BJ (cell line): ENCODE measurements at regions of chr3 and their contacts with region 1.

Region 1: DNA sequence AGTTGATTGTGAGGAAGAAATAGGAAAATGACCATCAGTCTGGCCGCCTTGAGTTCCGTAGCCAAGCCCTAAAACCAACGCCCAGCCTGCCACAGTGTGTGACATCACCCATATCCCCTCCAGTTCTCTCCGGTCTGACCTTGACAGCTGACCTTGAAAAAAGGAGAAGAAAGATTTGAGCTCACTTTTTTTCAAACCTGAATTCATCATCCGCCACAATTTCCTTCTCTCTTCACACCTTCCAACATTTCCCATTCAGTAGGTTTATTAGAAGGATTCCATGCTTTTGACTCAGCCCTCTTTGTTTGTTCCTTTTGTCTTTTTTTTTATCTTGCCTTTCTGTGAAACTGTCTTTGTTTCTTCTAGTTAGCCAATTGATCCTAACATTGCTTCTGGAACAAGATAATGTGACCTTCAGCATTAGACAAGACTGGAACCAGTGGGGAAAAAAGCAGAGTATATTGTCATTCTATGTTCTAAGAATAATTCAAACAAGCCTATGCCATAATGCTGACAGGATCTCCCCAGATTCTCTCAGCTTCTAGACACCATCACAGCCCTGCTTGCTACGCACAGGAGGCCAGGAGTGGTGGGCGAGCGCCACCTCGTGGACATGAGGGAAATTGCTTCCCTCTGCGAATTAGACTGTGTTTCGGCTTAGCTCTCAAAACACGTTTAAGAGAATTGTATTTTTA is 283.1 kb downstream of the FGF12 start:
- DNase-seq: no peak
- H3K4me3 ChIP-seq: no peak overlapping the region
- H3K27me3 ChIP-seq: no peaks in the 10 kb centered on the region
- CTCF ChIP-seq: peak; percentile 97

Region 2: GRCh38 chr3:190883973-190884832 is 1560.0 kb before region 1 on chr3:
- CTCF ChIA-PET with region 1: interaction called, 42 read pairs
- POLR2A ChIA-PET with region 1: no interaction called
- DNase-seq: no peak
- H3K4me3 ChIP-seq: no peak overlapping the region
- H3K27me3 ChIP-seq: no peaks in the 10 kb centered on the region
- CTCF ChIP-seq: peak; percentile 93

Region 3: GRCh38 chr3:191136347-191136746 is 1307.9 kb before region 1 on chr3:
- CTCF ChIA-PET with region 1: interaction called, 17 read pairs
- POLR2A ChIA-PET with region 1: no interaction called
- DNase-seq: no peak
- H3K4me3 ChIP-seq: no peak overlapping the region
- H3K27me3 ChIP-seq: no peaks in the 10 kb centered on the region
- CTCF ChIP-seq: peak; percentile 50

Region 4: DNA sequence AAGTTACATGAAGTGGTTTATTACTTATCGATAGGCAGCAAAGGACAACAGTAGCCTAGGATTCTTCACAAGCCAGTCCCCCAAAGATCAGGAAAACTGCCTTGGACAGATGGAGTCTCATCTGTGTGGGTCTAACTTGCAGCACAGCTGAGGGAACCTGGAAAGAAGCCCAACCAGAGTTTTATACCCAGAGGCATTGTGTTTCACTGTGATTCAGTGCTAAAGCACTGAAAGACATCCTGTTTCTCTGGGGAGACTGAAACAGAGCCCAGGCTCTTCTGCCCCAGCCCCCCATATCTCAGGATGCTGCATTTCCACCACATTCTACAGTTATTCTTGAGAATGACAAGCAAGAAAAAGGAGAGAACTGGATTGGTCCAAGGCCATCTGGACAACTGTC is 1031.5 kb before region 1 on chr3:
- CTCF ChIA-PET with region 1: interaction called, 27 read pairs
- POLR2A ChIA-PET with region 1: no interaction called
- DNase-seq: peak; percentile 79
- H3K4me3 ChIP-seq: no peak overlapping the region
- H3K27me3 ChIP-seq: no peaks in the 10 kb centered on the region
- CTCF ChIP-seq: no peak

Region 5: DNA sequence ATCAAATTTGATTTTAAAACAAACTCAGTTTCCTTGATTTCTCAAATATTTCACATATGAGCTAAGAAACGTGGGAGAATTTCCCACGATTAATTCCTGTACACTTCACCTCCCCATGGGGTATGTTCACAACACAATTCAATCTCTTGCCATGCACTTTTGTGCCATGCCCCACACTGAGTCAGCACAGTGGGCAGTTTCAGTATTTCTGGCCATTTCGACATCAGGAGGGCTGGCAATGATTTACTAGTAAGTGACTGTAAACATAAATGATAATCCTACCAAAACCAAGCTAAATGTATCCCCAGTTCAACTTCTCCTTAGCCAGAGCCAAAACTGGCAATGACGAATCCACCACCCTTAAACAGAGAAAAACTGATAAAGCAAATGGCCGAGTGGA is 10.5 kb before region 1 on chr3:
- CTCF ChIA-PET with region 1: interaction called, 22 read pairs
- POLR2A ChIA-PET with region 1: no interaction called
- DNase-seq: no peak
- H3K4me3 ChIP-seq: no peak overlapping the region
- H3K27me3 ChIP-seq: no peaks in the 10 kb centered on the region
- CTCF ChIP-seq: no peak

Region 6: DNA sequence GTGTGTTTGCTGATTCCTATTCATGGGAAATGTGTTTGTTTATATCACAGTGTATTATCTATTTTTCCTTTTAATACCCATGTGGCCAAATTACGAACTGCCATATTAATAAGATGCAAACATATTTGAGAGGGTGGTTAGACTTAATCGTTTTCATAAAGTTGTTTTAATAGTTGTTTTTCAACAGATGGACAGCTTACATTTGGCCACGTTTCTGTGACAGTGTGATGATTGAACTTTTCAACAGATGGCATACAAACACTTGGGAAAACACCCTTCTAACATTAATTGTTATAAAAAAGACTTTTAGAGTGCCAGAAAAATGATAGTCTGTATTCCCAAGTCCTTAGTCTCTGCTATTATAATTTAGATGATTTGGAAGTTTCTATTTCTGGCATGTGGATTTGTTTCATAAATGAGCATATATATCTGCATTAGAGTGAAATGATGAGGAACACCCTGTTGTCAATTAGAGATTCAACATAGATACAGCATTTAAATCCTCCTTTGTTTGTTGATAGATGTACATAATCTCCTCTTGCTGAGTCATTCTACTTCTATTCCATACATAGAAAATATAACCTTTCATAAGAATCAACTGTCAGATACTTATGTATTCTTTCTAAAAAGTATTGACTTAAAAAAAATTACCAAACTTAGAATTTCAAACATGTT is 809.9 kb after region 1 on chr3:
- CTCF ChIA-PET with region 1: no interaction called
- POLR2A ChIA-PET with region 1: no interaction called
- DNase-seq: no peak
- H3K4me3 ChIP-seq: no peak overlapping the region
- H3K27me3 ChIP-seq: no peaks in the 10 kb centered on the region
- CTCF ChIP-seq: no peak